Heart right ventricle (tissue), 16 donors: ENCODE measurements at regions of chr16 and their contacts with region 1.

Region 1: DNA sequence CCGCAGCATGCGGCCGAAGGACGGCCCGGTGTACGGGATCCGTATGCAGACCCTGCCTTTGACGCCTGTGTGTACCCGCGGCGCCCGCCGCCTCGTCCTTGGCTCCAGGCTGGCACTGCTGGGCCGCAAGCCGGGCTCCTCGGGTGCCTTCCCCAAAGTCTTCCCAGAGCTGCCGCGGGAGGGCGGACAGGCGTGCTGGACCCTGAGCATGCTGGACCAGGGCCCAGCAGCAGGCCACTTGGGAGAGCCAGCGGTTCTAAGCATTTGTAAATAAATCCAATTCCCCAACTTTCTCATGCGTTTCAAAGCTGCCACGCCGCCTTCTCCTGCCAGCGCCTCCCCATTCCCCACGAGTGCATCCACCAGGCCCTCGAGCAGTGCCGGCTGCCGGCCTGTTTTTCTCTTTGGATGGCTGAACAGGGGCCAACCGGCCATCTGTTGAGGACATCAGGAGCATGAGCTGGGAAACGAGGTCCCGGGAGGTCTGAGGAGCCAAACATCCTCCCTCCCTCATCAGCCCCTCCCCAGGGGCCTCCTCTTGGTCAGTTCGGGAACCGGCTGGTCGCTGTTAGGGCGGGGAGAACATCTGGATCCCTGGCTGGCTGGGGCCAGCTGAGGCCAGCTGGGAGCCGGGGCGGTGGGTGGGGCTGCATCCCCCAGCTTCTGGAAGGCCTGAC is 20.5 kb upstream of the PABPN1L start:
- DNase-seq: peak; percentile 90 to 94
- ATAC-seq: peak; percentile 82 to 94 (median 88)
- H3K4me3 ChIP-seq: peak overlapping the region in 2 of 10 donors; percentile 12 to 22
- H3K27ac ChIP-seq: peak overlapping the region; percentile 63 to 90 (median 82)
- H3K4me1 ChIP-seq: peaks cover 19 to 40% (median 27%) of the 10 kb centered on the region in 9 donors
- H3K27me3 ChIP-seq: peaks cover 0 to under 1% (median 0%) of the 10 kb centered on the region in 7 donors
- CTCF ChIP-seq: peak in 6 of 9 donors; percentile 14 to 62 (median 40)

Region 2: DNA sequence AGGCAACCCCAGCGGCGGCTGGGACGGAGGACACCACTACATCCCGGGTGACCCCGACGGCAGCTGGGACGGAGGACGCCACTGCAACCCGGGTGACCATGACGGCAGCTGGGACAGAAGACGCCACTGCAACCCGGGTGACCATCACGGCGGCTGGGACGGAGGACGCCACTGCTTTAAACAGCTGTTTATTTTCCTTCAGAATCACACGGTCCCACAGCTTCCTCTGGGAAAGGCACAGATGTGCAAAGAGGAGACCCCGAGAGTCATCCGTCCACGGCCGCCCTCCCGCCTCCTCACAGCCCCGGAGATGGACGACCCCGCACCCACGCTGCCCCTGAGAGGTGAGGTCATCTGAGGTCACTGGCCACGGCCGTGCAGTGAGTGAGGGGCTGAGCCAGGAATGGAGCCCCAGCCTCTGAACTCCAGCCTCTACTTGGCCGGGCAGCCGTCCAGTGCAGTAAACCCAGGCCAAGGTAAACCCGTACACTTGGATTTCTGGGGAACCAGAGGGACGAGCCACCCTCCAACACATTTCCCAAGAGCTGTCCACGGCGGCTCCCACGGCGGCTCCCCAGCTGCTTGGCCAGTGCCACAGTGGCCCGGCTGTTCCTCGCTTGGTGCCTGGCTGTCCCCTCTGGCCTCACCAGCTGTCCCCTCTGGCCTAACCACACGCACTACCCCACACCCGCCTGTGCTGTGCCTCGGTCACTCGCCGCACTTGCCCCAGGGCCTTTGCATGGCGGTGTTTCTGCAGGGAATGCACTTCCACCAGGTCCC is 22.6 kb after region 1 on chr16:
- intact Hi-C with region 1: loop called in 1 of 10 experiments (anchors 1 kb)
- DNase-seq: peak; percentile 56 to 70
- ATAC-seq: peak; percentile 16 to 64 (median 45)
- H3K4me3 ChIP-seq: no peak overlapping the region
- H3K27ac ChIP-seq: peak overlapping the region; percentile 20 to 80 (median 57)
- H3K4me1 ChIP-seq: peaks cover 6 to 86% (median 37%) of the 10 kb centered on the region in 9 donors
- H3K27me3 ChIP-seq: no peaks in the 10 kb centered on the region
- CTCF ChIP-seq: no peak

Region 3: GRCh38 chr16:88920618-88921590 is 33.9 kb after region 1 on chr16:
- intact Hi-C with region 1: loop called in 5 of 10 experiments (anchors 1 to 5 kb)
- DNase-seq: peak; percentile 82 to 85
- ATAC-seq: peak; percentile 69 to 90 (median 86)
- H3K4me3 ChIP-seq: peak overlapping the region in 7 of 10 donors; percentile 7 to 48 (median 28)
- H3K27ac ChIP-seq: peak overlapping the region; percentile 58 to 89 (median 78)
- H3K4me1 ChIP-seq: peaks cover 32 to 72% (median 63%) of the 10 kb centered on the region in 9 donors
- H3K27me3 ChIP-seq: no peaks in the 10 kb centered on the region
- CTCF ChIP-seq: no peak